A549 (cell line): ENCODE measurements at regions of chr2 and their contacts with region 1.

Region 1: DNA sequence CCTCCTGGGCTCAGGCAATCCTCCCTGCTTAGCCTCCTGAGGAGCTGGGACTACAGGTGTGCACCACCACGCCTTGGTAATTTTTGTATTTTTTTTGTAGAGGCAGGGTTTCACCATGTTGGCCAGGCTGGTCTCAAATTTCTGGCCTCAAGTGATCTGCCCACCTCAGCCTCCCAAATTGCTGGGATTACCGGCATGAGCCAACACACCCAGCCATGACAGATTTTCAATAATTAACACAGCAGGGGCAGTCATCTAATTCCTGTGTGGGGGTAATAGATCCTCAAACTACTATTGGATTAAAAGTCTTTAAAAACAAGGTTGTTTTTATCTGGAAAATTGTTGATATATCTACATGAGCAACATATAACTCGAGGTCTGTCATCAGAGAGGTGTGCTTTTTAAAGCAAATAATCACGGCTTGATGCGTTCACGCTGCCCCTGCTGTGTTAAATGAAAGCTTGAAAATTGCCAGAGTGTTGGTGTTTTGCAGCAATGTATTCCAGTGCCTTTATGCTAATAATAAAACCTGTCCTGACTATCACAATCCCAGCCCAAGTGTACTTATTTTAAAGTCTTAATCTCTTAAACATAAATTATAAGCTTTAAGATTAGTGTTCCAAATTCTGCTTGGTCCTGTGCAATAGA is 35.6 kb upstream of the ASB1 start:
- DNase-seq: no peak
- ATAC-seq: no peak
- H3K4me3 ChIP-seq: no peak overlapping the region
- H3K27ac ChIP-seq: no peak overlapping the region
- H3K4me1 ChIP-seq: no peaks in the 10 kb centered on the region
- CTCF ChIP-seq: no peak
- EP300 ChIP-seq: no peak
- POLR2A ChIP-seq: no peak
- RAD21 ChIP-seq: no peak

Region 2: GRCh38 chr2:237987268-237987667 is 403.9 kb before region 1 on chr2:
- CTCF ChIA-PET with region 1: no interaction called
- POLR2A ChIA-PET with region 1: no interaction called
- DNase-seq: no peak
- ATAC-seq: no peak
- H3K4me3 ChIP-seq: no peak overlapping the region
- H3K27ac ChIP-seq: no peak overlapping the region
- H3K4me1 ChIP-seq: no peaks in the 10 kb centered on the region
- CTCF ChIP-seq: no peak
- EP300 ChIP-seq: no peak
- POLR2A ChIP-seq: no peak
- RAD21 ChIP-seq: no peak

Region 3: GRCh38 chr2:238370823-238371372 is 20.3 kb before region 1 on chr2:
- CTCF ChIA-PET with region 1: interaction called, 10 read pairs
- POLR2A ChIA-PET with region 1: no interaction called
- DNase-seq: peak; percentile 35 to 67
- ATAC-seq: peak; percentile 94 to 97
- H3K4me3 ChIP-seq: no peak overlapping the region
- H3K27ac ChIP-seq: peak overlapping the region; percentile 21 to 36; a peak in 1 of 6 replicates
- H3K4me1 ChIP-seq: peaks cover 5% of the 10 kb centered on the region; the same call in 1 of the 3 replicates
- CTCF ChIP-seq: peak; percentile 80
- EP300 ChIP-seq: no peak
- POLR2A ChIP-seq: no peak
- RAD21 ChIP-seq: peak; percentile 89 to 96